H1 (cell line): ENCODE measurements at regions of chr16 and their contacts with region 1.

Region 1: GRCh38 chr16:81873843-81874752 is 95.0 kb downstream of the PLCG2 start:
- DNase-seq: peak in 1 of 2 experiments; percentile 80
- H3K4me3 ChIP-seq: no peak overlapping the region
- H3K27ac ChIP-seq: 0 out of 2 replicates have a peak overlapping the region, but pooled peaks have one; percentile 4
- H3K4me1 ChIP-seq: peaks cover 2 to 14% (median 10%) of the 10 kb centered on the region in 4 experiments
- H3K27me3 ChIP-seq: no peaks in the 10 kb centered on the region
- CTCF ChIP-seq: peak; percentile 74 to 94 (median 79)
- EP300 ChIP-seq: no peak
- POLR2A ChIP-seq: no peak
- RAD21 ChIP-seq: peak; percentile 68 to 75

Region 2: GRCh38 chr16:81730090-81731051 is 143.7 kb before region 1 on chr16:
- CTCF ChIA-PET with region 1: interaction called, 18 read pairs
- POLR2A ChIA-PET with region 1: no interaction called
- DNase-seq: peak; percentile 99
- H3K4me3 ChIP-seq: peak overlapping the region; percentile 7 to 55 (median 34); a peak in 6 of 8 replicates
- H3K27ac ChIP-seq: peak overlapping the region; percentile 80
- H3K4me1 ChIP-seq: peaks cover 0 to 7% (median 4%) of the 10 kb centered on the region in 4 experiments; a peak in 5 of 7 replicates
- H3K27me3 ChIP-seq: no peaks in the 10 kb centered on the region
- CTCF ChIP-seq: peak; percentile 77 to 100 (median 91)
- EP300 ChIP-seq: peak in 1 of 2 experiments; percentile 84; a peak in 2 of 3 replicates
- POLR2A ChIP-seq: peak in 1 of 2 experiments; percentile 67; a peak in 2 of 3 replicates
- RAD21 ChIP-seq: peak; percentile 56 to 59

Region 3: DNA sequence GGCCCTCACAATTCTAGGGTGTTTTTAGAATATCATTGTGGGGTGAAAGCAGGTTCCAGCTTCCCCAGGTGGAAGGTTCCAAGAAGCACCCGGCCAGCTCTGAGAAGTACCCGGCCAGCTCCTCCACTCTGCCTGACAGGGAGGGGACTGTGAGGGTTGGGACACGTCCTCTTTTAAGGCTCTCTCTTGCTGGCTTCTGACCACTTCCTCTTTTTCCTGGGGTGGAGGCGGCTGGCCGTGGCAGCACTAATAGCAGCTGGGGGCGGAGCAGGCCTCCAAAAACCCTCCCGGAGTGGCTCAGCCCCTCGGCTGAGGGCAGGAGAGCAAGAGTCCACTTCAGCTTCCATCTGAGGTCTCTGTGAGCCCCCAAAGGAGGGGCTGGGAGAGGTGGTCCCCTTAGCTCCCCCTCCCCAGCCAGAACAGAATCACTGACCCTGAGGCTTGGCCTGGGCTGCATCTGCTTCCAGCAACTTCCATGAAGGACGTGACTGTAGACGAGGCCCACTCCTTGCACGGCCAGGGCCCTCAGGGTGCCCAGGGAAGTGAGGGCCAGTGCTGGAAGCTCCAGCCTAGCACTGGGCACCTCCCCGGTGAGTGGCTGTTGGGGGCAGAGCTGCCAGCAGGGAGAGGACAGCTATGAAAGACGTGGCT is 121.7 kb before region 1 on chr16:
- CTCF ChIA-PET with region 1: interaction called, 11 read pairs
- POLR2A ChIA-PET with region 1: no interaction called
- DNase-seq: no peak
- H3K4me3 ChIP-seq: no peak overlapping the region
- H3K27ac ChIP-seq: no peak overlapping the region
- H3K4me1 ChIP-seq: peaks cover 0 to 3% (median 0%) of the 10 kb centered on the region in 4 experiments; a peak in 4 of 7 replicates
- H3K27me3 ChIP-seq: no peaks in the 10 kb centered on the region
- CTCF ChIP-seq: no peak
- EP300 ChIP-seq: no peak
- POLR2A ChIP-seq: no peak
- RAD21 ChIP-seq: no peak

Region 4: DNA sequence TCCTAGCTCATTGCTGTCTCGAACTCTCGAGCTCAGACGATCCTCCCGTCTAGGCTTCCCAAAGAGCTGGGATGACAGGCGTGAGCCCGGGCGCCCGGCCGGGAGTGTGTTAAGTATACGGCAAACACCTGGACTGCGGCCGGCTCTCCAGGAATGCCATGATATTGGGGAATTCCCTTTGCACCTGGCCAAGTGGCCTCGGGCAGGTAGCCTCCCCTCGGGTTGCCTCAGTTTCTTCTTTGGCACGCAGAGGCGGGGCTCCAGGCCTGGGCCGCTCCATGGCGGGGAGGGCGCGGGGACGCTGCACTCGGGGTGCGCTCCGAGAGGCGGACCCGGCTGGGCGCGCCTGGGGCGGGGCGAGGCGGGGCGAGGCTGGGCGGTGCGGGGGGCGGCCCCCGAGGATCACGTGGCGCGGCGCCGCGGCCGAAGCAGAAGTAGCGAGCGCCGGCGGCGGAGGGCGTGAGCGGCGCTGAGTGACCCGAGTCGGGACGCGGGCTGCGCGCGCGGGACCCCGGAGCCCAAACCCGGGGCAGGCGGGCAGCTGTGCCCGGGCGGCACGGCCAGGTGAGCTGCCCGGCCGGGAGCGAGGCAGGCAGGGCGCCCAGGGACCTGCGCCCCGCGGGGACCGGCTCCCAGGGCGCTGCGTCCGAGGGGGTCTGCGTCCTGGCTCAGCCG is 95.1 kb before region 1 on chr16 and contains the start of gene PLCG2:
- CTCF ChIA-PET with region 1: interaction called, 17 read pairs
- POLR2A ChIA-PET with region 1: no interaction called
- DNase-seq: peak in 1 of 2 experiments; percentile 87
- H3K4me3 ChIP-seq: peak within 1 kb of the TSS; percentile 42 to 67 (median 56)
- H3K27ac ChIP-seq: no peak within 1 kb of the TSS
- H3K4me1 ChIP-seq: peaks cover 0 to 6% (median under 1%) of the 10 kb centered on the region in 4 experiments; a peak in 4 of 7 replicates
- H3K27me3 ChIP-seq: peaks cover 10 to 31% (median 23%) of the 10 kb centered on the region in 4 experiments
- CTCF ChIP-seq: no peak
- EP300 ChIP-seq: no peak
- POLR2A ChIP-seq: no peak
- RAD21 ChIP-seq: no peak
- total RNA-seq, gene PLCG2: 5.6 and 6.9 TPM in 2 replicates

Region 5: GRCh38 chr16:81841722-81842121 is 32.4 kb before region 1 on chr16:
- CTCF ChIA-PET with region 1: interaction called, 20 read pairs
- POLR2A ChIA-PET with region 1: no interaction called
- DNase-seq: no peak
- H3K4me3 ChIP-seq: no peak overlapping the region
- H3K27ac ChIP-seq: no peak overlapping the region
- H3K4me1 ChIP-seq: no peaks in the 10 kb centered on the region; a peak in 1 of 7 replicates
- H3K27me3 ChIP-seq: no peaks in the 10 kb centered on the region
- CTCF ChIP-seq: no peak
- EP300 ChIP-seq: no peak
- POLR2A ChIP-seq: no peak
- RAD21 ChIP-seq: no peak

Region 6: GRCh38 chr16:81863630-81864352 is 10.3 kb before region 1 on chr16:
- CTCF ChIA-PET with region 1: interaction called, 78 read pairs
- POLR2A ChIA-PET with region 1: interaction called, 3 read pairs
- DNase-seq: no peak
- H3K4me3 ChIP-seq: peak overlapping the region in 3 of 4 experiments; percentile 2 to 23 (median 2); a peak in 3 of 8 replicates
- H3K27ac ChIP-seq: no peak overlapping the region
- H3K4me1 ChIP-seq: peaks cover 0 to 20% (median 13%) of the 10 kb centered on the region in 4 experiments; a peak in 6 of 7 replicates
- H3K27me3 ChIP-seq: no peaks in the 10 kb centered on the region
- CTCF ChIP-seq: no peak
- EP300 ChIP-seq: no peak
- POLR2A ChIP-seq: no peak
- RAD21 ChIP-seq: no peak

Region 7: DNA sequence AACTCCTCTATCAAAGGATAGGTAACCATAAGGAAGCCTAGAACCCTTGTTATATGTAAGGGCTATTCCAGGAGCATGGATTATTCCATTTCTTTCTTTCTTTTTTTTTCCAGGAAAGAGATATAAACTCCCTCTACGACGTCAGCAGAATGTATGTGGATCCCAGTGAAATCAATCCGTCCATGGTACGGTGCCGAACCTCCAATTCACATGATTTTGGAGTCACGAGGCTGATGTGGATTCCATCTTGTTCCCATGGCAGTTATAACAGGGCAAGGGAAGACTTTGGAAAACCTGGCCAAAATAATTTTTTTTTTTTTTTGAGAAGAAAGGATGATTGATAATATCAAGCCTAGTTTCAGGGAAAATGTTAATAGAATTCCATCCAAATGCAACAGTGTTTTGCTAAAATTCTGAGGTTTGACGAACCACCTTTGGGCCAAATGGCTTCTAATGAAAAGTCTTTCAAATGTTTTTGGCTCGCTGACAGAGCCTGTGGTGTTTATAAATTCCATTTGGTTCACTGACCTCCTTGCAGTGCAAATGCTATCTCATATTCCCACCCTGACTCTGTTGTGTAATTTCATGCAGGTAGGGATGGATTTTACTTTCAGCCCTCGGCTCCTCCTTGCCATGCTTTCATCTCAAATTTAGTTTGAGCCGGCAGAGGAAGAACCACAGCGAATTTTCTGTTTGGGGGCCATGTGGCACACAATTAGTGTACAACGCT is 47.2 kb after region 1 on chr16:
- CTCF ChIA-PET with region 1: no interaction called
- POLR2A ChIA-PET with region 1: no interaction called
- DNase-seq: no peak
- H3K4me3 ChIP-seq: no peak overlapping the region
- H3K27ac ChIP-seq: no peak overlapping the region
- H3K4me1 ChIP-seq: no peaks in the 10 kb centered on the region
- H3K27me3 ChIP-seq: no peaks in the 10 kb centered on the region
- CTCF ChIP-seq: no peak
- EP300 ChIP-seq: no peak
- POLR2A ChIP-seq: no peak
- RAD21 ChIP-seq: no peak